ENCODE measurements at regions of chr1 and their contacts with region 1.

Region 1: DNA sequence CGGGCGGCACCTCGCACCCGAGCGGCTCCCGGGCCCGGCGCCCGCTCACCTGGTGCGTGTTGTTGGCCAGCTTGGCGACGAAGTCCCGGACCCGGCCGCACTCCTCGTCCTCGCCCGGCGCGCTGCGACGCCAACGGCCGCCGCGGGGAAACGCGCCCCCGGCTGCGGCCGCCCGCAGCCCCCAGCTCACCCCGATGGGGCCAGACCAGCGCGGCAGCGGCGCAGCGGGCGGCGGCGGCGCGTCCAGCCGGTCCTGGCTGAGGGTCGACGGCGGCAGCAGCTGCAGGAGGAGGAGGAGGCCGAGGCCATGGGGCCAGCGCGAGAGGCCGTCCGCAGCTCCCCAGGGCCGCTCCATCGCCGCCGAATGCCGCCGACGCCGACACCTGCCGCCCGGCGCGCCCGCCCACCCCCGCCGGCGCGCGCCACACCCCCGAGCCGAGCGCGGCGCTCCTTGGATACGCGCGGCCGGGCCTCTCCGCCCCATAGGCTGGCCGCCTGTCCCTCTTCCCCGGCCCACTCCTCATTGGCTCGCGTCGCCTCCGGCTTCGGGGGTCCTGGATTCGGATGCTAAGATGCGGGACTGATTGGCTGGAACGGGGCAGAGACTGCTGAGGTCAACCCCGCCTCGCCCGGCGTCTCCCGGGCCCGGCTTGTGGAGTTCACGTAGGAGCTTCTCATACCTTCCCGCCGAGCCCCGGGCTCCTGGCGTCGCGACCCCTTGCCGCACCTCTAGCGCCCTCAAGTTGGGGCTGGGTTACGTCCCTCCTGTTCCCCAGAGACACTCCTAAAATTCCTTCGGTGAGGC is at the start of gene SORT1:
- ATAC-seq: peak; percentile 86 to 98 (median 97)
- H3K4me3 ChIP-seq: peak within 1 kb of the TSS; percentile 68 to 94 (median 76)
- H3K27ac ChIP-seq: peak within 1 kb of the TSS; percentile 47 to 64
- H3K4me1 ChIP-seq: peaks cover 23 to 33% of the 10 kb centered on the region in 2 donors
- total RNA-seq, gene SORT1: 6.7 to 52.3 (median 41.4) TPM

Region 2: GRCh38 chr1:108661030-108661620 is 736.6 kb before region 1 on chr1 and contains the start of gene HENMT1:
- in situ Hi-C with region 1: no loop called
- ATAC-seq: peak; percentile 43 to 94 (median 90)
- H3K4me3 ChIP-seq: peak within 1 kb of the TSS; percentile 32 to 40 (median 36)
- H3K27ac ChIP-seq: peak within 1 kb of the TSS in 1 of 2 donors; percentile 19
- H3K4me1 ChIP-seq: peaks cover 3 to 4% of the 10 kb centered on the region in 2 donors
- total RNA-seq, gene HENMT1: 1.00 to 11.8 (median 4.0) TPM

Region 3: GRCh38 chr1:108691942-108692723 is 705.6 kb before region 1 on chr1 and contains the start of gene PRPF38B:
- in situ Hi-C with region 1: loop called in 1 of 9 experiments (anchors 25 kb)
- ATAC-seq: peak; percentile 92 to 97 (median 96)
- H3K4me3 ChIP-seq: peak within 1 kb of the TSS; percentile 77 to 99 (median 94)
- H3K27ac ChIP-seq: peak within 1 kb of the TSS; percentile 97 to 98
- H3K4me1 ChIP-seq: peaks cover 3 to 23% of the 10 kb centered on the region in 2 donors
- total RNA-seq, gene PRPF38B: 22.0 to 61.4 (median 30.1) TPM

Region 4: DNA sequence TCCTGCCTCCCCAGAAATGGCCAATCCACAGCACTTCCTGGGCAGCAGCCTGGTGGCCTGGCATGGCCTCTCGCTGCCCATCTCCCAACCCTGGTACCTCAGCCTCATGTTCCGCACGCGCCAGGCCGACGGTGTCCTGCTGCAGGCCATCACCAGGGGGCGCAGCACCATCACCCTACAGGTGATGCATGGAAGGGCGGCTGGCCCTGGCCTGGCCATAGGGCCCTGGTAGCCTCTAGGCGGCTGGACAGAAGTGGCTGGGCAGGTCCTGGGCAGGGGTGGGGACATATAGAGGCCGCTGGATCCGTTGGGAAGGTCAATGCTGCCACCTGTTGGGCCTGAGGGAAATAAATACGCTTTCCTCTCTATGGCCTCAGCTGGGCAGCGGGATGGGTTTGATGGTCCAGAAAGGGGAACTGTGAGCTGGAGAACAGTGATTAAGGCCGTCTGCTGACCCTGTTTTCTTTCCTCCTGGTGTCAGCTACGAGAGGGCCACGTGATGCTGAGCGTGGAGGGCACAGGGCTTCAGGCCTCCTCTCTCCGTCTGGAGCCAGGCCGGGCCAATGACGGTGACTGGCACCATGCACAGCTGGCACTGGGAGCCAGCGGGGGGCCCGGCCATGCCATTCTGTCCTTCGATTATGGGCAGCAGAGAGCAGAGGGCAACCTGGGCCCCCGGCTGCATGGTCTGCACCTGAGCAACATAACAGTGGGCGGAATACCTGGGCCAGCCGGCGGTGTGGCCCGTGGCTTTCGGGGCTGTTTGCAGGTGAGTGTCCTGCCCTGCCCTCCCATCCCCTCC is 133.9 kb before region 1 on chr1:
- in situ Hi-C with region 1: loop called in 2 of 9 experiments (anchors 25 kb)
- ATAC-seq: peak; percentile 67 to 99 (median 83)
- H3K4me3 ChIP-seq: no peak overlapping the region
- H3K27ac ChIP-seq: peak overlapping the region in 1 of 2 donors; percentile 40
- H3K4me1 ChIP-seq: peaks cover 22 to 26% of the 10 kb centered on the region in 2 donors

Region 5: GRCh38 chr1:109277434-109278204 is 120.1 kb before region 1 on chr1:
- in situ Hi-C with region 1: loop called in 3 of 9 experiments (anchors 10 to 25 kb)
- ATAC-seq: peak; percentile 15 to 75 (median 64)
- H3K4me3 ChIP-seq: no peak overlapping the region
- H3K27ac ChIP-seq: peak overlapping the region; percentile 1 to 20
- H3K4me1 ChIP-seq: peaks cover 34 to 36% of the 10 kb centered on the region in 2 donors

Measured in motor neuron (in vitro differentiated cells).